ENCODE measurements at regions of chr20 and their contacts with region 1.

Region 1: GRCh38 chr20:3980260-3981131 is 34.9 kb downstream of the RNF24 start:
- DNase-seq: peak in 4 of 14 experiments; percentile 47 to 68 (median 64)
- ATAC-seq: peak; percentile 67
- H3K4me3 ChIP-seq: peak overlapping the region; percentile 52
- H3K4me3 Mint-ChIP-seq: peak overlapping the region; percentile 71
- H3K27ac ChIP-seq: peak overlapping the region; percentile 30 to 67
- H3K27ac Mint-ChIP-seq: peak overlapping the region; percentile 84
- H3K4me1 ChIP-seq: peaks cover 16% of the 10 kb centered on the region
- H3K4me1 Mint-ChIP-seq: peaks cover 26% of the 10 kb centered on the region
- H3K27me3 ChIP-seq: no peaks in the 10 kb centered on the region
- H3K27me3 Mint-ChIP-seq: no peaks in the 10 kb centered on the region
- CTCF ChIP-seq: no peak

Region 2: GRCh38 chr20:2800521-2801285 is 1179.8 kb before region 1 on chr20 and contains the start of gene CPXM1:
- CTCF ChIA-PET with region 1: no interaction called
- POLR2A ChIA-PET with region 1: no interaction called
- intact Hi-C with region 1: loop called in 1 of 2 experiments (anchors 10 kb)
- DNase-seq: peak in 2 of 14 experiments; percentile 18 to 25
- ATAC-seq: peak; percentile 11
- H3K4me3 ChIP-seq: peak within 1 kb of the TSS; percentile 51
- H3K4me3 Mint-ChIP-seq: peak within 1 kb of the TSS; percentile 88
- H3K27ac ChIP-seq: no peak within 1 kb of the TSS
- H3K27ac Mint-ChIP-seq: no peak within 1 kb of the TSS
- H3K4me1 ChIP-seq: peaks cover 25% of the 10 kb centered on the region
- H3K4me1 Mint-ChIP-seq: peaks cover 25% of the 10 kb centered on the region
- H3K27me3 ChIP-seq: peaks cover 57 to 61% of the 10 kb centered on the region in 2 experiments
- H3K27me3 Mint-ChIP-seq: peaks cover 81% of the 10 kb centered on the region
- CTCF ChIP-seq: no peak
- total RNA-seq, gene CPXM1: not detected

Region 3: DNA sequence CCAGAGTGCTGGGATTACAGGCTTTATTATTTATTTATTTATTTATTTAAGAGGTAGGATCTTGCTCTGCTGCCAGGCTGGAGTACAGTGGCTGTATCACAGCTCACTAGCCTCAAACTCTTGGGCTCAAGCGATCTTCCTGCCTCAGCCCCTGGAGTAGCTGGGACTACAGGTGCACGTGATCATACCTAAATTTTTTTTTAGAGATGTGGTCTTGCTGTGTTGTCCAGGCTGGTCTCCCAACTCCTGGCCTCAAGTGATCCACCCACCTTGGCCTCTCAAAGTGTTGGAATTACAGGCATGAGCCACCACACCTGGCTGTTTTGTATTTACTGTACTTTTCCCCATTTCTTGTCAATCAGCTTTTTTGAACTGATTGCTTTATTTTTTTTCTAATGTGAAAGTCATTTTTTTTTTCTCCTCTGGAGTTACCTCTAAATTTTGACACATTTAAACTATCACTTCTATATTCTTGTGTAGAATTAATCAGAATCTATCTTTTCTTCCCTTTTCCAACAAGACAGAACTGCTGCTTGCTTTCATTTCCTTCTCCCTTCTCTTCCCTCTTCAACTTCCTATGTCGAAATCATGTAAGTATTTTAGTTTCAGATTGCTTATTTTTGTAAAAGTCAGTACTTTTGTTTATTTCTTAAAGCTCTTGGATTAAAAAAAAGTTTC is 79.3 kb before region 1 on chr20:
- CTCF ChIA-PET with region 1: no interaction called
- POLR2A ChIA-PET with region 1: no interaction called
- intact Hi-C with region 1: loop called in 1 of 2 experiments (anchors 10 kb)
- DNase-seq: no peak
- ATAC-seq: no peak
- H3K4me3 ChIP-seq: no peak overlapping the region
- H3K4me3 Mint-ChIP-seq: peak overlapping the region; percentile 62
- H3K27ac ChIP-seq: peak overlapping the region in 1 of 2 donors; percentile 7
- H3K27ac Mint-ChIP-seq: peak overlapping the region; percentile 70
- H3K4me1 ChIP-seq: peaks cover 74% of the 10 kb centered on the region
- H3K4me1 Mint-ChIP-seq: peaks cover 76% of the 10 kb centered on the region
- H3K27me3 ChIP-seq: no peaks in the 10 kb centered on the region
- H3K27me3 Mint-ChIP-seq: no peaks in the 10 kb centered on the region
- CTCF ChIP-seq: no peak

Region 4: DNA sequence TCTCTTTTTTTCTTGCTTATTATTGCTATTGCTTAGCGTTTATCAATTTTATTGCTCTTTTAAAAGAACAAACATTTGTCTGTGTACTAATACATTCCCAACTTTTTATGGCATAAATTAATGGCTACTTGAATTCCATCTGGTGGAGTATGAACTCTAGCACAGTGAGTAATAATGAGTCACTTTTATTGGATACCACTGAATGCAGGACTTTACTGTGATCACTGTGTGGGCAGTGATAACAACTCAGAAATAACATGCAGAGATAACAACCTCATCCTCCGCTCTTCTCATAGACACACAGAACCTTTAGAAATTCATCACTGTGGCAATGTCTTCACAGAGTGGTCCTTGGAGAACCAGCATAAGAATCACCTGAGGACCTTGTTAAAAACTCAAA is 566.3 kb after region 1 on chr20:
- CTCF ChIA-PET with region 1: no interaction called
- POLR2A ChIA-PET with region 1: no interaction called
- intact Hi-C with region 1: no loop called
- DNase-seq: no peak
- ATAC-seq: no peak
- H3K4me3 ChIP-seq: no peak overlapping the region
- H3K4me3 Mint-ChIP-seq: no peak overlapping the region
- H3K27ac ChIP-seq: no peak overlapping the region
- H3K27ac Mint-ChIP-seq: no peak overlapping the region
- H3K4me1 ChIP-seq: no peaks in the 10 kb centered on the region
- H3K4me1 Mint-ChIP-seq: no peaks in the 10 kb centered on the region
- H3K27me3 ChIP-seq: peaks cover 5 to 19% of the 10 kb centered on the region in 2 experiments
- H3K27me3 Mint-ChIP-seq: peaks cover 73% of the 10 kb centered on the region
- CTCF ChIP-seq: no peak

Region 5: DNA sequence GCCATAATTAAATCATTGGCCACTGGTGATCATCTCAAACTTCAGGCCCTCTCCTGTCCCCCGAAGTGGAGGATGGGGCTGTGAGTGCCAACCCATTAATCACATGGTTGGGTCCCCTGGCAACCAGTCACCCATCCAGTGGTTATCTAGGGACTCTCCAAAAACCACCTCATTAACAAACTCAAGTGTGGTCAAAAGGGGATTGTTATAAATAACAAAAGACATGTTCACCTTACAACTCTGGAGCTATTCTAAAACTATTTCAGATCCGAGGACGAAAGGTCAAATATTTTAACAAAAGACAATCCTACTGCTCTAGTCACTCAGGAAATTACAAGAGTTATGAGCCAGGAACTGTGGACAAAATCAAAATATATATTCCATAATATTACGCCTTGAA is 645.7 kb after region 1 on chr20:
- CTCF ChIA-PET with region 1: no interaction called
- POLR2A ChIA-PET with region 1: no interaction called
- intact Hi-C with region 1: no loop called
- DNase-seq: no peak
- ATAC-seq: no peak
- H3K4me3 ChIP-seq: no peak overlapping the region
- H3K4me3 Mint-ChIP-seq: no peak overlapping the region
- H3K27ac ChIP-seq: no peak overlapping the region
- H3K27ac Mint-ChIP-seq: no peak overlapping the region
- H3K4me1 ChIP-seq: no peaks in the 10 kb centered on the region
- H3K4me1 Mint-ChIP-seq: no peaks in the 10 kb centered on the region
- H3K27me3 ChIP-seq: no peaks in the 10 kb centered on the region
- H3K27me3 Mint-ChIP-seq: peaks cover 23% of the 10 kb centered on the region
- CTCF ChIP-seq: no peak

Region 6: DNA sequence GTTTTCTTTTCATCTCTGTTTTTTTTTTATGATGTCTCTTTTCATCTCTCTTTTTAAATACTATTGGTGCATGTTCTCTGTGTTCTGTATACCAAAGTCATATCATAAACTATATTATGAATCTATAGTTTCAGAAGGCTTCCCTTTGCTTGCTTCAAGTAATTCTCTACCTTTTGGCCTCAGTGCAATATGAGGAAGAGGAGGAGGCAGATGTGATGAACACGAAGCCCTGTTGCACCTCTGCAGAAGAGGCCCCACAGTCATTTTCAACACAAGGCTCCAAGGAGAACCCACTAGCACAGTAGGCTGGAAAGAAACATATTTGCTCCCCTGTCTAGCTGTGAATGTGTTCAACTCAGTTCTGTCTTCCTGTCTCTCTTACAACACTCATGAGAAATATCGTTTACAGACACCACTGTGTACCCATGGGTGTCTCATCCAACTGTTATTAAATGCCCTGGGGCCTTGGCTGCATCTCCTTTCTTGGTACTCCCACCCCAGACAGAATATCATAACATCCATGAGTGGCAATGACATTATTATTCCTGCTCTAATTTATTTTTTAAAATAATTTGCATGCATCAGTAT is 1647.1 kb after region 1 on chr20:
- CTCF ChIA-PET with region 1: no interaction called
- POLR2A ChIA-PET with region 1: no interaction called
- intact Hi-C with region 1: no loop called
- DNase-seq: no peak
- ATAC-seq: no peak
- H3K4me3 ChIP-seq: no peak overlapping the region
- H3K4me3 Mint-ChIP-seq: no peak overlapping the region
- H3K27ac ChIP-seq: no peak overlapping the region
- H3K27ac Mint-ChIP-seq: no peak overlapping the region
- H3K4me1 ChIP-seq: no peaks in the 10 kb centered on the region
- H3K4me1 Mint-ChIP-seq: no peaks in the 10 kb centered on the region
- H3K27me3 ChIP-seq: no peaks in the 10 kb centered on the region
- H3K27me3 Mint-ChIP-seq: no peaks in the 10 kb centered on the region
- CTCF ChIP-seq: no peak

Measured in CD4-positive, alpha-beta T cell (primary cell).